CD4-positive, alpha-beta T cell (primary cell): ENCODE measurements at regions of chr4 and their contacts with region 1.

Region 1: DNA sequence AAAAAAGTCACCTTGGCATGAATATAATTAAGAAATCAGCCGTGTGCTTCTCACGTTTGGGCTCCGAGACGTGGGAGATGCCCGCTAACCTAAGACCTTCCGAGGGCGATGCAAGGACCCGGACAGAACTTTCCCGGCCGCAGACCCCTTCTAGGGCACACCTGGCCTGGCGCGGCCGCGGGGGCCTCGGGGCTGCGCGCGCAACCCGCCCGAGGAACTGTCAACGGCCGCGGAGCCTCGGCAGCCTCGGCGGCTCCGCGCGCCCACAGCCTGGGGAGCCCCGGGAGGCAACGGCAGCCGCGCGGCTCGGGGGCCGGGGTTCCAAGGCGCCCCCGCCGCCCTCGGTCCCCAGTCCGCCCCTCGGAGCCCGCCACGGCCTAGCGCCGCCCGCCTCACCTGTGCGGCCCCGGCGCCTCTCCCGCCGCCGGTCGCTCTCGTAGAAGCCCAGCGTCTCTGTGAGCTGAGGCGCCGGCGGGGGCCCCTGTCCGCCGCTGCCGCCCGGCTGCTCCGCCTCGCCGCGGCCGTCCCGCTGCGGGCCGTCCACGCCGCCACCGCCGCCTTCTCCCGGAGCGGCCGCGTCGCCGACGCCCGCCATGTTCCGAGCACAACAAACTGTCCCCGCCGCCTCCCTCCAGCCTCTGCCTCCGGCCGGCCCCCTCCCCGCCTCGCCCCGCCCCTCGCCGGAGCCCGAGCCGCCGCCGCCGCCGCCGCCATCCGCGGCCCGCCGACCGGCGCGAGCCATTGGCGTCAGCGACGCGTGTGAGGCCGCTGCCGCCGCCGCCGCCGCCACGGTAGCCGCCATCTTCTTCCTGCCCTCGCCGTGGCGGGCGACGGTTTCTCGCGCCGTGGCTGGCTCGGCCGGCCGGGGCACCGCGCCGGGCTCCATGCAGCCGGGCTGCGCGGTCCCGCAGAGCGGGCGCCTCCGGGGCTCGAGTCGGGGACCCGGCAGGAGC is at the start of gene TAPT1:
- DNase-seq: peak; percentile 45 to 89 (median 71)
- ATAC-seq: peak; percentile 52
- H3K4me3 ChIP-seq: peak within 1 kb of the TSS; percentile 80
- H3K4me3 Mint-ChIP-seq: peak within 1 kb of the TSS; percentile 97
- H3K27ac ChIP-seq: peak within 1 kb of the TSS; percentile 71 to 73
- H3K27ac Mint-ChIP-seq: peak within 1 kb of the TSS; percentile 97
- H3K4me1 ChIP-seq: peaks cover 21% of the 10 kb centered on the region
- H3K4me1 Mint-ChIP-seq: peaks cover 65% of the 10 kb centered on the region
- H3K27me3 ChIP-seq: no peaks in the 10 kb centered on the region
- H3K27me3 Mint-ChIP-seq: no peaks in the 10 kb centered on the region
- CTCF ChIP-seq: no peak
- total RNA-seq, gene TAPT1: 70.6 to 77.1 TPM

Region 2: DNA sequence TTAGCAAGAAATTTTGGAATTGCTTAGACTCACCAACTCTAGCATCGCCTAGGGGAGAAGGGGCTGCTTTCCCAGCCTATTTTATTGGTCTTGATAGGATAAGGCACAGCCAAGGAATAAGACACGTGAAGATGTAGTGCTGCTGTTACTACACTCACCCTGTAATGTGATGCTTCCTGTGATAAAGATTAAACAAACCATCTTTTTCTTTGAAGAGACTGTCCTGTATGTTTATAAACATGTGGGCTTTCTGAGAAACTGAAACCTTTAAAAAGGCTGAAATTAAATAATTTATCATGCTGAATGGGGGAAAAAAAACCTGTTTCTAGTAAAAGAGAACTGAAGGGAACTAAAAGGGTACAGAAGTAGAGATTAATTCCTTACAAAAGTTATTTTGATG is 13.0 kb before region 1 on chr4:
- CTCF ChIA-PET with region 1: no interaction called
- POLR2A ChIA-PET with region 1: interaction called, 12 read pairs
- intact Hi-C with region 1: loop called in 1 of 2 experiments (anchors 2 kb)
- DNase-seq: peak in 1 of 14 experiments; percentile 32
- ATAC-seq: no peak
- H3K4me3 ChIP-seq: no peak overlapping the region
- H3K4me3 Mint-ChIP-seq: no peak overlapping the region
- H3K27ac ChIP-seq: no peak overlapping the region
- H3K27ac Mint-ChIP-seq: peak overlapping the region; percentile 24
- H3K4me1 ChIP-seq: peaks cover 34% of the 10 kb centered on the region
- H3K4me1 Mint-ChIP-seq: peaks cover 74% of the 10 kb centered on the region
- H3K27me3 ChIP-seq: no peaks in the 10 kb centered on the region
- H3K27me3 Mint-ChIP-seq: no peaks in the 10 kb centered on the region
- CTCF ChIP-seq: no peak

Region 3: GRCh38 chr4:16745009-16745635 is 519.0 kb after region 1 on chr4:
- CTCF ChIA-PET with region 1: no interaction called
- POLR2A ChIA-PET with region 1: no interaction called
- intact Hi-C with region 1: no loop called
- DNase-seq: no peak
- ATAC-seq: no peak
- H3K4me3 ChIP-seq: no peak overlapping the region
- H3K4me3 Mint-ChIP-seq: no peak overlapping the region
- H3K27ac ChIP-seq: no peak overlapping the region
- H3K27ac Mint-ChIP-seq: no peak overlapping the region
- H3K4me1 ChIP-seq: no peaks in the 10 kb centered on the region
- H3K4me1 Mint-ChIP-seq: no peaks in the 10 kb centered on the region
- H3K27me3 ChIP-seq: no peaks in the 10 kb centered on the region
- H3K27me3 Mint-ChIP-seq: peaks cover 7% of the 10 kb centered on the region
- CTCF ChIP-seq: no peak